ENCODE measurements at regions of chr9 and their contacts with region 1.

Region 1: DNA sequence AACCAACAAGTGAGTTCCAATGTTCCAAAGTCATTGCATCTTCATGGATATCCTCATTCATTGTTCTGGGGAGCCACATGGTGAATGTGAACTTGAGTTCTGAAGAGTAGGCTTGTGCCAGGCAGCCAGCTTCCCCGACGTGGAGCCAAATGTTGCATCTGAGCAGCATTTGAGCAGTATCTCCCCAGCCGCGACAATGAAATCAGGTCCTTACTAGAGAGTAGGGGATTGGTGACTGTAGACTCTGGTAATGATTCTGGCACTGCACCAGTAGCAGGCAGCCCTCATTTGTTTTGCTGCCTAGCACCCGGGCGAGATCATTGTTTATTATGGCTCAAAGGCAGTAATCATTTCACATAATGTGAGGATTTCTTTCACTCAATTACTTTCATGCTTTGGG is 451.4 kb upstream of the C9orf72 start:
- DNase-seq: no peak
- H3K4me3 Mint-ChIP-seq: no peak overlapping the region
- H3K27ac Mint-ChIP-seq: no peak overlapping the region
- H3K4me1 Mint-ChIP-seq: no peaks in the 10 kb centered on the region
- H3K27me3 Mint-ChIP-seq: no peaks in the 10 kb centered on the region
- CTCF ChIP-seq: no peak

Region 2: GRCh38 chr9:27977931-27978330 is 46.7 kb before region 1 on chr9:
- CTCF ChIA-PET with region 1: no interaction called
- intact Hi-C with region 1: loop called (anchors 5 kb)
- DNase-seq: no peak
- H3K4me3 Mint-ChIP-seq: no peak overlapping the region
- H3K27ac Mint-ChIP-seq: no peak overlapping the region
- H3K4me1 Mint-ChIP-seq: no peaks in the 10 kb centered on the region
- H3K27me3 Mint-ChIP-seq: no peaks in the 10 kb centered on the region
- CTCF ChIP-seq: no peak